ENCODE measurements at regions of chr19 and their contacts with region 1.

Region 1: GRCh38 chr19:49182848-49183344 is 25.3 kb downstream of the TRPM4 start:
- DNase-seq: no peak
- H3K4me3 ChIP-seq: no peak overlapping the region
- H3K27me3 ChIP-seq: no peaks in the 10 kb centered on the region
- CTCF ChIP-seq: no peak

Region 2: GRCh38 chr19:49200238-49200862 is 17.5 kb after region 1 on chr19:
- CTCF ChIA-PET with region 1: interaction called, 38 read pairs
- POLR2A ChIA-PET with region 1: no interaction called
- DNase-seq: no peak
- H3K4me3 ChIP-seq: no peak overlapping the region
- H3K27me3 ChIP-seq: no peaks in the 10 kb centered on the region
- CTCF ChIP-seq: no peak

Measured in BJ (cell line).